Lower leg skin (tissue), 4 donors: ENCODE measurements at regions of chr3 and their contacts with region 1.

Region 1: GRCh38 chr3:52685709-52686691 is at the starts of genes GNL3 and PBRM1:
- DNase-seq: peak; percentile 91 to 98
- H3K4me3 ChIP-seq: peak within 1 kb of the TSS; percentile 67
- CTCF ChIP-seq: no peak
- POLR2A ChIP-seq: no peak
- total RNA-seq, gene GNL3: 79.3 to 111 (median 86.4) TPM
- total RNA-seq, gene PBRM1: 51.6 to 78.7 (median 74.0) TPM

Region 2: DNA sequence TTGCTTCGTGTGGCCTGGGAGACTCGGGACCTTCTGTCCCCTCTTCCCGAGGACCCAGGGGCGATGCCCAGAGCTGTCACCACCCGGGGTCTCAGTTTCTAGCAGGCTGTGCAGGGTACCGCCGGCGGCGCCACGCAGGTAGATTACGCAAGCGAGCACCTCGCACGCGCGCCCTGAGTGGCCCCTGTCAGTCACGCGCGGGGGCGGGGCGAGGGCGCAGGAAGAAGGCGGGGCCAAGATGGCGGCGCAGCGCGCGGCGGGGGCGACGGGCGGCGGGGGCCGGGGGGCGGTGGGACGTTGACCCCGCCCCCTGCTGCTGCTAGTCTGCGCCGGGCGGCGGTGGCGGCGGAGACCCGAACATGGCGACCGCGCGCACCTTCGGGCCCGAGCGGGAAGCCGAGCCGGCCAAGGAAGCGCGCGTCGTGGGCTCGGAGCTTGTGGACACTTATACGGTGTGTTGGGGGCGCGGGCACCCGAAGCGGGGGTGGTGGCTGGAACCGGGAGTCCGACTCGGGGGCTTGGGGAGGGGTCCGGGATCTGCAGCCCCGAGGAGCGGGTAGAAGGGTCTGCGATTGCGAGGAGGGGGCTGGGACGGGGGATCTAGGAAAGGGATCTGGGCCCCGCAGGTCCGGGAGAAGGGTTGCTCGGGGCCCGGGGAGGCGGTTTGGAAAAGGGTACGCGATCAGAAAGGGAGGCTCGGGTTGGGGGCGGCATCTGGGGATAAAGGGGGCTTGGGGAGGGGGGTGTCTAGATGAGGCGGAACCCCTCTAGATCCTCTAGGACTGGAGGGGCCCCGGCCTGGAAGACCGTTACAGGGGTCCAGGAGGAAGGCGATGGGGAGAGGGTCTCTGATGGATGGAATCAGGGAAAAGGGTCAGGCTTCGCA is 230.5 kb before region 1 on chr3 and contains the start of gene NISCH:
- intact Hi-C with region 1: loop called (anchors 10 kb)
- DNase-seq: peak; percentile 84 to 98
- H3K4me3 ChIP-seq: peak within 1 kb of the TSS; percentile 93
- CTCF ChIP-seq: no peak
- POLR2A ChIP-seq: no peak
- total RNA-seq, gene NISCH: 69.9 to 133 (median 85.9) TPM

Region 3: DNA sequence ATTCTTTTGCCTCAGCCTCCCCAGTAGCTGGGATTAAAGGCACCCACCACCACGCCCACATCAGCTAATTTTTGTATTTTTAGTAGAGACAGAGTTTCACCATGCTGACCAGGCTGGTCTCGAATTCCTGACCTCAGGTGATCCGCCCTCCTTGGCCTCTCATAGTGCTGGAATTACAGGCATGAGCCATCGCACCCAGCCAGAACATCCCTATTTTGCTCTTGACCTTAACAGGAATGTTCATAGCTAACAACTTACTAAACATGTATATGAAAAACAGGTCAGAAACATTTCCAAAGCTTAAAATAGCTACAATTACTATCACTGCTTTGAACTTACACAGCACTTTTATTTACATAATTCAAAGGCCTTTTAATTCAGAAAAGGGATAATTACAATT is 115.9 kb before region 1 on chr3:
- intact Hi-C with region 1: no loop called
- DNase-seq: no peak
- H3K4me3 ChIP-seq: no peak overlapping the region
- CTCF ChIP-seq: no peak
- POLR2A ChIP-seq: no peak

Region 4: DNA sequence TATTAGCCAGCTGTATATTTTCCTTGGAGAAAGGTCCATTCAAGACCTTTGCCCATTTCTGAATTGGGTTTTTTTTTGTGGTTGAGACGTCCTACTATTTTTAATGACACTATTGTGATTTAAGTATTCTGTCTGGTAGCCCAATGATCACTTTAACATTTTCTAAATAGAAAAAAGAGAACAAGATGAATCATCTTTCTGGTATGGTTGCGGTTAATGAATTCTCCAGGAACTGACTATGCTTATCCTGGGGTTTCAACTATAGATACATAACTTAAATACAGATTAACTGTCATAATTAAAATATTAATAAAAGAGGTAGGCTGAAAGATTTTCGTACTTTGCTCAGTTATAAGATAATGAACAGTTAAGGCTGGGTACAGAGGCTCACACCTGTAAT is 52.2 kb before region 1 on chr3:
- intact Hi-C with region 1: loop called (anchors 2 kb)
- DNase-seq: no peak
- H3K4me3 ChIP-seq: no peak overlapping the region
- CTCF ChIP-seq: no peak
- POLR2A ChIP-seq: no peak